Dorsolateral prefrontal cortex (tissue), 120 donors: ENCODE measurements at regions of chr18 and their contacts with region 1.

Region 1: GRCh38 chr18:70384181-70384790 is 95.4 kb downstream of the SOCS6 start:
- DNase-seq: no peak
- H3K4me3 ChIP-seq: no peak overlapping the region
- H3K27ac ChIP-seq: peak overlapping the region in 53 of 59 donors; percentile 34 to 99 (median 94)
- H3K27me3 ChIP-seq: no peaks in the 10 kb centered on the region
- CTCF ChIP-seq: no peak

Region 2: GRCh38 chr18:70288851-70289328 is 95.4 kb before region 1 on chr18 and contains the start of gene SOCS6:
- intact Hi-C with region 1: loop called in 1 of 2 experiments (anchors 5 kb)
- DNase-seq: peak in 7 of 10 donors; percentile 21 to 73 (median 58)
- H3K4me3 ChIP-seq: peak within 1 kb of the TSS; percentile 45 to 86 (median 75)
- H3K27ac ChIP-seq: peak within 1 kb of the TSS; percentile 47 to 94 (median 83)
- H3K27me3 ChIP-seq: no peaks in the 10 kb centered on the region
- CTCF ChIP-seq: no peak
- total RNA-seq, gene SOCS6: 11.8 to 30.4 (median 19.8) TPM